IMR-90 (cell line): ENCODE measurements at regions of chr7 and their contacts with region 1.

Region 1: GRCh38 chr7:144118339-144118738 is 4.6 kb upstream of the OR2A14 start:
- DNase-seq: no peak
- ATAC-seq: no peak
- H3K4me3 ChIP-seq: no peak overlapping the region
- H3K27ac ChIP-seq: no peak overlapping the region
- H3K4me1 ChIP-seq: no peaks in the 10 kb centered on the region
- H3K27me3 ChIP-seq: no peaks in the 10 kb centered on the region
- CTCF ChIP-seq: no peak
- POLR2A ChIP-seq: no peak
- RAD21 ChIP-seq: no peak

Region 2: GRCh38 chr7:144137501-144137900 is 19.2 kb after region 1 on chr7:
- CTCF ChIA-PET with region 1: no interaction called
- POLR2A ChIA-PET with region 1: no interaction called
- dilution Hi-C with region 1: no loop called
- in situ Hi-C with region 1: no loop called
- intact Hi-C with region 1: loop called (anchors 2 kb)
- DNase-seq: no peak
- ATAC-seq: no peak
- H3K4me3 ChIP-seq: no peak overlapping the region
- H3K27ac ChIP-seq: no peak overlapping the region
- H3K4me1 ChIP-seq: no peaks in the 10 kb centered on the region
- H3K27me3 ChIP-seq: no peaks in the 10 kb centered on the region
- CTCF ChIP-seq: no peak
- POLR2A ChIP-seq: no peak
- RAD21 ChIP-seq: no peak

Region 3: GRCh38 chr7:144158861-144159260 is 40.5 kb after region 1 on chr7:
- CTCF ChIA-PET with region 1: no interaction called
- POLR2A ChIA-PET with region 1: no interaction called
- dilution Hi-C with region 1: no loop called
- in situ Hi-C with region 1: no loop called
- intact Hi-C with region 1: loop called (anchors 1 kb)
- DNase-seq: no peak
- ATAC-seq: no peak
- H3K4me3 ChIP-seq: no peak overlapping the region
- H3K27ac ChIP-seq: no peak overlapping the region
- H3K4me1 ChIP-seq: no peaks in the 10 kb centered on the region
- H3K27me3 ChIP-seq: no peaks in the 10 kb centered on the region
- CTCF ChIP-seq: no peak
- POLR2A ChIP-seq: no peak
- RAD21 ChIP-seq: no peak